ENCODE measurements at regions of chrX and their contacts with region 1.

Region 1: DNA sequence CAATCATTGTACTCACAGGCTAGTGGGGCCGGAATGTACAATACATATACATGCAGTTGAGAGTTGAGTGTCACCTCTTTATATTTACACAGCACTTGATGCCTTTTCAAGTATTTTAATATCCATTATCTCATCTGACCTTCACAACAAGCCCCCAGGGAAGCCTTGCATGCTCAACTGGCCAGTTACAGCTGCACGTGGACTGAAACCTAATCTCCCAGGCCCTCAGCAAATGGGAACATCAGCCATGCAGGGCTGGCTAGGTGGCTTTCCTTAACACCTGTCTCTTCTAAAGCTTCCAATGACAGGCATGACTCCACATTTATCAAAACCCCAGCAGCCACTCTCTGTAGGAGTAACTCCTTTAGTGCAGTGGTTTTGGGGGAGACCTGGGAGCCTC is 56.4 kb downstream of the PHKA2 start:
- DNase-seq: no peak
- ATAC-seq: no peak
- H3K4me3 ChIP-seq: no peak overlapping the region
- H3K27ac ChIP-seq: no peak overlapping the region
- H3K4me1 ChIP-seq: no peaks in the 10 kb centered on the region
- H3K27me3 ChIP-seq: no peaks in the 10 kb centered on the region
- CTCF ChIP-seq: no peak
- POLR2A ChIP-seq: no peak

Region 2: GRCh38 chrX:19121898-19122640 is 194.5 kb after region 1 on chrX and contains the start of gene ADGRG2:
- intact Hi-C with region 1: loop called in 1 of 2 experiments (anchors 10 kb)
- DNase-seq: peak; percentile 55 to 76 (median 66)
- ATAC-seq: peak; percentile 87 to 91 (median 88)
- H3K4me3 ChIP-seq: peak within 1 kb of the TSS; percentile 37 to 55 (median 39)
- H3K27ac ChIP-seq: no peak within 1 kb of the TSS
- H3K4me1 ChIP-seq: no peaks in the 10 kb centered on the region
- H3K27me3 ChIP-seq: peaks cover 0 to 6% of the 10 kb centered on the region in 2 donors
- CTCF ChIP-seq: peak in 3 of 4 donors; percentile 16 to 43 (median 20)
- POLR2A ChIP-seq: no peak
- total RNA-seq, gene ADGRG2: 0.53 to 3.5 (median 2.1) TPM

Measured in right lobe of liver (tissue), 6 donors.